AG04450 (cell line): ENCODE measurements at regions of chrX and their contacts with region 1.

Region 1: DNA sequence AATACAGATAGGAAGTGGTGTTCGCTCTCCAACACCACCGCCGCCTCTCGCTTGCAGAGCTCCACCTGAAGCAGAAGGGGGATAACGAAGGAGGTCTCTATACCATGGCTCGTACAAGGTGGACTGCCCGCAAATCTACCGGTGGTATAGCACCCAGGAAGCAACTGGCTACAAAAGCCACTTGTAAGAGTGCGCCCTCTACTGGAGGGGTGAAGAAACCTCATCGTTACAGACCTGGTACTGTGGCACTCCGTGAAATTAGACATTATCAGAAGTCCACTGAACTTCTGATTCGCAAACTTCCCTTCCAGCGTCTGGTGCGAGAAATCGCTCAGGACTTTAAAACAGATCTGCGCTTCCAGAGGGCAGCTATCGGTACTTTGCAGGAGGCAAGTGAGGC is 5.2 kb upstream of the BMP15 start:
- DNase-seq: no peak
- H3K4me3 ChIP-seq: no peak overlapping the region
- H3K27ac ChIP-seq: no peak overlapping the region
- H3K27me3 ChIP-seq: peaks cover 2% of the 10 kb centered on the region
- CTCF ChIP-seq: peak; percentile 17; the same call in 1 of the 2 replicates

Region 2: DNA sequence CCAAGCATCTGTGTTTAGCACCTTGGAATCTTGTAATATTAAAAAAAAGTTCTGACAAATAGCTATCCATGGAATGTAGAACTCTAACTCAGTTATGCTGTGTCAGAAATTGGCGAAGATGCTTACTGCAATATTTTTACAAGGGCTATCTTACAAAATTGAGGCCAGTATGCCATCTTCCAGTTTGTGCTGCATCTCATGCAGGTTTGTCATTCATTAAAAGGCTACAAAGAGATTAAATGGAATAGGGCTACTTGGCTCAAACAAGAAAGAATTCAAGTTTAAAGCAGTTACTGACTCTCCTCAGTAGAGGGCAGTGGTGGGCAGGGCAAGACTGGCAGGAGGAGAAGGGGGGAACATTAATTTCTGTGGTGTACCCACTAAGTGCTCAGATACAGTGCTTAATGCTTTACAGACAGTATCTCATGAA is 157.8 kb before region 1 on chrX:
- CTCF ChIA-PET with region 1: interaction called, 41 read pairs
- POLR2A ChIA-PET with region 1: no interaction called
- DNase-seq: no peak
- H3K4me3 ChIP-seq: no peak overlapping the region
- H3K27ac ChIP-seq: no peak overlapping the region
- H3K27me3 ChIP-seq: no peaks in the 10 kb centered on the region
- CTCF ChIP-seq: peak; percentile 74

Region 3: GRCh38 chrX:50877370-50877769 is 28.0 kb before region 1 on chrX:
- CTCF ChIA-PET with region 1: no interaction called
- POLR2A ChIA-PET with region 1: no interaction called
- DNase-seq: no peak
- H3K4me3 ChIP-seq: no peak overlapping the region
- H3K27ac ChIP-seq: no peak overlapping the region
- H3K27me3 ChIP-seq: no peaks in the 10 kb centered on the region
- CTCF ChIP-seq: no peak